ENCODE measurements at regions of chr3 and their contacts with region 1.

Region 1: GRCh38 chr3:48034000-48034516 is 17.8 kb upstream of the MAP4 start:
- DNase-seq: no peak
- ATAC-seq: peak; percentile 77 to 87 (median 78)
- H3K4me3 ChIP-seq: no peak overlapping the region
- H3K27ac ChIP-seq: peak overlapping the region; percentile 76
- H3K4me1 ChIP-seq: peaks cover 57% of the 10 kb centered on the region
- H3K27me3 ChIP-seq: no peaks in the 10 kb centered on the region
- CTCF ChIP-seq: no peak

Region 2: GRCh38 chr3:48069339-48069738 is 35.3 kb after region 1 on chr3:
- intact Hi-C with region 1: loop called in 1 of 2 experiments (anchors 5 kb)
- DNase-seq: no peak
- ATAC-seq: peak in 3 of 4 donors; percentile 16 to 34 (median 24)
- H3K4me3 ChIP-seq: peak overlapping the region; percentile 29
- H3K27ac ChIP-seq: peak overlapping the region; percentile 75
- H3K4me1 ChIP-seq: peaks cover 71% of the 10 kb centered on the region
- H3K27me3 ChIP-seq: no peaks in the 10 kb centered on the region
- CTCF ChIP-seq: no peak